ENCODE measurements at regions of chr4 and their contacts with region 1.

Region 1: DNA sequence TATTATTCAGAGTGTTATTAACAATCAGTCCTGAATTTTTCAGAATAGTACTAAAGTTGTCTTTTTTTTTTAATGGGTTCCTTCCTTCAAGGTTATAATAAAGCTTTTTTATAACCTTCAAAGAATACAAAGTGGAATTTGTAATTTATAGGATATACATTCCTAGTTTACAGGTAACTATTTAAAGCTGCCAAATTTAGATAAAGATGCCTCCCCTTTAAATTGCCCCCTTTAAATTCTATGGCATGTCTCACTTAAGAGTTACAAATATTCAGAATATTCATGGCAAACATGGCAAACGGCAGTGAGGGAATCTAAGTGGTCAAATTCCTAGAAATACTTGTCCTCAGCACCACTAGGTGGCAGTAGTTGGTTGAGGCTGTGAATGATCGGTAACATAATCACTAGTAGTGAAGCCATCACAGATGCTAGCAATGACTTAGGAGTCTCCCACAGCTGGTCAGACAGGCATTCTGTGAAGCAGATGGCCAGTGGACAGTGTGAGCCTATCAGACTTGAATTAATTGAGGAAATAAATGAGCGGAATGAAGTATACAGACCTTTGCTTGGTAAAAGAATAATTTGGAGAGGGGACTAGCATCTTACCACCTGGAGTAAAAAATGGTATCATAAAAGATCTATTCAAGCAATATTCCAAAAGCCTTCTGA is 86.4 kb downstream of the CBR4 start:
- DNase-seq: peak in 1 of 2 experiments; percentile 62
- H3K4me3 ChIP-seq: no peak overlapping the region
- H3K27ac ChIP-seq: no peak overlapping the region
- H3K4me1 ChIP-seq: peaks cover 0 to 14% (median 9%) of the 10 kb centered on the region in 4 experiments; a peak in 4 of 7 replicates
- H3K27me3 ChIP-seq: peaks cover 0 to 1% (median 0%) of the 10 kb centered on the region in 4 experiments; a peak in 1 of 7 replicates
- CTCF ChIP-seq: peak in 2 of 3 experiments; percentile 74 to 81; a peak in 3 of 4 replicates
- EP300 ChIP-seq: no peak
- POLR2A ChIP-seq: no peak
- RAD21 ChIP-seq: peak; percentile 84 to 85

Region 2: GRCh38 chr4:168585168-168586091 is 338.2 kb before region 1 on chr4:
- CTCF ChIA-PET with region 1: interaction called, 18 read pairs
- POLR2A ChIA-PET with region 1: interaction called, 3 read pairs
- DNase-seq: peak; percentile 53 to 78
- H3K4me3 ChIP-seq: no peak overlapping the region
- H3K27ac ChIP-seq: no peak overlapping the region
- H3K4me1 ChIP-seq: peaks cover 0 to 3% (median 0%) of the 10 kb centered on the region in 4 experiments; a peak in 2 of 7 replicates
- H3K27me3 ChIP-seq: no peaks in the 10 kb centered on the region
- CTCF ChIP-seq: peak; percentile 72 to 83 (median 81)
- EP300 ChIP-seq: no peak
- POLR2A ChIP-seq: no peak
- RAD21 ChIP-seq: peak; percentile 91 to 94

Region 3: DNA sequence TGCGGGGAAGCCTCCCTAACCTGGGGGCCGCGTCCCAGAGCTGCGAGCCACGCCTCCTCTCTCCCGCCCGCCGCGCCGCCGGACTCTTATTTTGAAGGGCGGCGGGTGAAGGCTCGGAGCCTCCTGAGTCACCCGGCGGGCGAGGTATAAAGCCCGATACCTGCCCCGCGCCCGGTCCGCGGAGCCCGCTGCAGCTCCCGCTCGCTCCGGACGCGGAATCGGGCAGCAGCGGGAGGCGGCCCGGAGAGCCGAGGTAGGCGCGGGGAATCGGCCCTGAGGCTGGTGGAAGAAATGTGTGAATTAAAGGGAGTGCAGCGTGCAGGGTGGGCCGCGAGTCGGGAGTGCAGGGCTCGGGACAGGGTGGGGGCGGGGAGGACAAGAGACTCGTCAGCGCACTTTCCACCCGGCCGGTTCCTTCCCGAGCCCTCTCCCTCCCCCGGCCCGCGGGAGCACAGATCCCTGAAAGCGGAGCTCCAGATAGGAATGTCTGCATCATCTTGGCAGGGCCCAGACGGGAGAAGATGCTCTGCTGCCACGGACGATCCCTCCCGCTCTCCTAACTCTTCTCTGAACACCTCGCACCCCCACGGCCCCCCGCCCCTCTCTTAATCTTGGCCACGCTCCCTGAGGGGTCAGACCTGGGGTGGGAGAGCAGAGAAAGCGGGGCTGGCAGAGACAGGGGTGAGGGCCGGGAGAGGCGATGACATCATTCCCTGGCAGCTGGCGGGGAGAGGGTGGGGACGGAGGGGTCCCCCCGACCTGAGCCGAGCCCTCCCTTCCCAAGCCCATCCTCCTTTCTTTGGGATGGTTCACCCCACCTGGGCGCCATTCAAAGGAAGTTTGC is 91.5 kb before region 1 on chr4:
- CTCF ChIA-PET with region 1: interaction called, 39 read pairs
- POLR2A ChIA-PET with region 1: interaction called, 14 read pairs
- DNase-seq: peak; percentile 51 to 84
- H3K4me3 ChIP-seq: peak overlapping the region; percentile 69 to 96 (median 81)
- H3K27ac ChIP-seq: peak overlapping the region; percentile 88
- H3K4me1 ChIP-seq: peaks cover 0 to 20% (median under 1%) of the 10 kb centered on the region in 4 experiments; a peak in 5 of 7 replicates
- H3K27me3 ChIP-seq: peaks cover 0 to 11% (median 5%) of the 10 kb centered on the region in 4 experiments; a peak in 3 of 7 replicates
- CTCF ChIP-seq: no peak
- EP300 ChIP-seq: 0 out of 3 replicates have a peak, but pooled peaks of 1 of the 2 experiments have one; percentile 10
- POLR2A ChIP-seq: peak; percentile 75 to 80
- RAD21 ChIP-seq: 0 out of 4 replicates have a peak, but pooled peaks of 1 of the 2 experiments have one; percentile 3

Region 4: DNA sequence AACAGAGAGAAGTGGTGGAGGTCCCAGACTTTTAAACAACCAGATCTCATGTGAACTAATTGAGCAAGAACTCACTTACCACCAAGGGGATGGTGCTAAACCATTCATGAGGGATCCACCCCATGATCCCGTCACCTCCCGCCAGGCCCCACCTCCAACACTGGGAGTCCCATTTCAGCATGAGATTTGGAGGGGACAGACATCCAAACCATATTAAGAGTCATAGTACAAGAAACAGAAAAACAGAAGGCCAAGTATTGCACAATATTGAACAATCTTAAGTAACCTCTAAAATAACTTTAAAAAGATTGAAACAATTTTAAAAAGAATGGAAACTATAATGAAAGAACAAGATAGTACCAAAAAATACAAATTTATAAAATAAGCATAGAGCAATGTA is 23.6 kb before region 1 on chr4:
- CTCF ChIA-PET with region 1: interaction called, 60 read pairs
- POLR2A ChIA-PET with region 1: no interaction called
- DNase-seq: no peak
- H3K4me3 ChIP-seq: no peak overlapping the region
- H3K27ac ChIP-seq: no peak overlapping the region
- H3K4me1 ChIP-seq: no peaks in the 10 kb centered on the region
- H3K27me3 ChIP-seq: no peaks in the 10 kb centered on the region; a peak in 1 of 7 replicates
- CTCF ChIP-seq: no peak
- EP300 ChIP-seq: no peak
- POLR2A ChIP-seq: no peak
- RAD21 ChIP-seq: no peak

Region 5: DNA sequence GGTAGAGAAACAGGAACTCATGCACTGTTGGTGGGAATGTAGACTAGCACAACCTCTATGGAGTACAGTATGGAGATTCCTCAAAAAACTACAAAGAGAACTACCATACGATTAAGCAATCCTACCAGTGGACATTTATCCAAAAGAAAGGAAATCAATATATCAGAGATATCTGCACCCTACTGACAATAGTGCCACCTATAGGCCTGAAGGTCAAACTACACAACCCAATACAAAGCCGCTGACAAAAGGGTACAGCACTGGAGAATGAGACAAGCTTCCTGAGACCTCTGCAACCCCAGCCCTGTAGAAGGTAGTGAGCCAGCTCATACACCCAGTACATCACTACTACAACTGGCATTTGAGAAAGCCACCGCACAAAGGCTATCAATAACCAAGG is 19.3 kb after region 1 on chr4:
- CTCF ChIA-PET with region 1: interaction called, 17 read pairs
- POLR2A ChIA-PET with region 1: no interaction called
- DNase-seq: peak in 1 of 2 experiments; percentile 51
- H3K4me3 ChIP-seq: no peak overlapping the region
- H3K27ac ChIP-seq: no peak overlapping the region
- H3K4me1 ChIP-seq: no peaks in the 10 kb centered on the region
- H3K27me3 ChIP-seq: no peaks in the 10 kb centered on the region
- CTCF ChIP-seq: peak in 2 of 3 experiments; percentile 61 to 71; a peak in 3 of 4 replicates
- EP300 ChIP-seq: no peak
- POLR2A ChIP-seq: no peak
- RAD21 ChIP-seq: peak; percentile 66 to 69

Region 6: GRCh38 chr4:168998596-168998995 is 74.9 kb after region 1 on chr4:
- CTCF ChIA-PET with region 1: interaction called, 11 read pairs
- POLR2A ChIA-PET with region 1: no interaction called
- DNase-seq: no peak
- H3K4me3 ChIP-seq: no peak overlapping the region
- H3K27ac ChIP-seq: no peak overlapping the region
- H3K4me1 ChIP-seq: no peaks in the 10 kb centered on the region
- H3K27me3 ChIP-seq: no peaks in the 10 kb centered on the region
- CTCF ChIP-seq: no peak
- EP300 ChIP-seq: no peak
- POLR2A ChIP-seq: no peak
- RAD21 ChIP-seq: no peak

Region 7: DNA sequence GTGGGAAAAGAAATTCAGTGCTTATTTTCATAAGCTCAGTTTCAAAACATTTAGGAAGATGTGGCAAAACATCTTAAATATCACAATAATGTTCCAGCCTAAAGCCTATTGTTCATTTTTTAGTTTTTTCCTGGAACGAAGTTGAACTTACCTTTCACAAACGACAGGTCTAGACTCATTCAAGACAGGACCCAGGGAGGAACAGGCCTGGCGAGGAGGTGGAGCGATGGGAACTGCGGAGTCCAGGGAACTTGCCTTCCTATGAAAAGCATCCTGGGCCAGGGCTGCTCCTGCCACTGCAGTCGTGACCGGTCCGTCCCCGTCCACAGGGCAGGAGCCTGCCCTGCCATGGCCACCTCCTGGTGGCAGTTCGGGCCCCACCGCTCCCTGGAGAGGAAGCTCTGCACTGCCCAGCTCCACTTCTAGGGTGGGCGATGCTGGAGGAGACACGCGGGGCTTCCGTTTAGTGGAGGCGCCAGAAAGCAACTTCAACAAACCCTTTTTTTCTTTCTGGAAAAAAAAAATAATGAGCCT is 183.1 kb after region 1 on chr4:
- CTCF ChIA-PET with region 1: no interaction called
- POLR2A ChIA-PET with region 1: no interaction called
- DNase-seq: no peak
- H3K4me3 ChIP-seq: no peak overlapping the region
- H3K27ac ChIP-seq: no peak overlapping the region
- H3K4me1 ChIP-seq: peaks cover 0 to 4% (median 3%) of the 10 kb centered on the region in 4 experiments; a peak in 3 of 7 replicates
- H3K27me3 ChIP-seq: no peaks in the 10 kb centered on the region
- CTCF ChIP-seq: no peak
- EP300 ChIP-seq: no peak
- POLR2A ChIP-seq: no peak
- RAD21 ChIP-seq: no peak

Region 8: DNA sequence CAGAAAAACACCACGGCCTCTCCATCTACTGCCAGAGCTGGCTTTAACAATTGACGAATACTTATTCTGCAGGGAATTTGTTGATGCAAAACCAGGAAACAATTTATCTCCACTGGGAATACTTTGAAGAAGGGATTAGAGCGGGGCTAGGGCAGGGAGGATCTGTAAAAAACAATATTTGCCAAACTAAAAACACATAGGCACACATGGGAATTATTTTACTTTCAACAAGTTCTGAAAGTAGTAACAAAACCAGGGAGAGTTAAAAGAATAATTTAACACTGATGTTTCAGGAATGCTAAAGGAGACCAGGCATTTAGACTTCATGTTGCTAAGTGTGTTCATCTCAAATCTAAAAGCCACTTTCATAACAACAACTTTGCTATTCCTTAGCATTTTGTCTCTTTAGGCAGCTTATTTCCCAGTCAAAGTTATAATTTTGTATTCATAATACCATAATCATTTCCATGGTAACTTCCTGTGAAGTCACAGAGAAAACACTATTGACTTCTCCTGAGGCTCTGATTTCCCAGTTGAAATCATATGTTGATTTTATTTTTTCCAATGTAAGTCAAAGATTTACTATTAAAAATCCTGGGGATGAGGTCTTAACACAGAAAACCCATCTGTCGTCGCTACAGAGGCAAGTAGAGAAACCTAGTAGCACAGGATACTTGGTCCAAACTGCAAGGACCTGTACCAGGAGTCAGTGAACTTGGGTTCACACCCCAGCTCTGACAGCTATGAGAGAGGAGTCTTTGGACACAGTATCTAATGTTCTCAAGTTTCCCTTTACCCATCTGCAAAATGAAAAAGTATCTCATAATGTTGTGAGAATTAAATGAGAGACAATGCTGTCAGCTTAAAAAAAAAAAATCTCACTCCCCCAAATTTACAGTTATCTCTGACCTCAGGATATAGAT is 277.8 kb after region 1 on chr4:
- CTCF ChIA-PET with region 1: no interaction called
- POLR2A ChIA-PET with region 1: no interaction called
- DNase-seq: no peak
- H3K4me3 ChIP-seq: no peak overlapping the region
- H3K27ac ChIP-seq: no peak overlapping the region
- H3K4me1 ChIP-seq: peaks cover 0 to 3% (median 0%) of the 10 kb centered on the region in 4 experiments; a peak in 1 of 7 replicates
- H3K27me3 ChIP-seq: no peaks in the 10 kb centered on the region
- CTCF ChIP-seq: no peak
- EP300 ChIP-seq: no peak
- POLR2A ChIP-seq: no peak
- RAD21 ChIP-seq: no peak

Region 9: GRCh38 chr4:169485791-169486742 is 562.4 kb after region 1 on chr4:
- CTCF ChIA-PET with region 1: interaction called, 16 read pairs
- POLR2A ChIA-PET with region 1: no interaction called
- DNase-seq: peak in 1 of 2 experiments; percentile 48
- H3K4me3 ChIP-seq: no peak overlapping the region
- H3K27ac ChIP-seq: no peak overlapping the region
- H3K4me1 ChIP-seq: peaks cover 0 to 3% (median 2%) of the 10 kb centered on the region in 4 experiments; a peak in 3 of 7 replicates
- H3K27me3 ChIP-seq: no peaks in the 10 kb centered on the region
- CTCF ChIP-seq: peak in 2 of 3 experiments; percentile 55 to 61; a peak in 2 of 4 replicates
- EP300 ChIP-seq: no peak
- POLR2A ChIP-seq: no peak
- RAD21 ChIP-seq: peak; percentile 88 to 89

Measured in H1 (cell line).